ENCODE measurements at regions of chr15 and their contacts with region 1.

Region 1: DNA sequence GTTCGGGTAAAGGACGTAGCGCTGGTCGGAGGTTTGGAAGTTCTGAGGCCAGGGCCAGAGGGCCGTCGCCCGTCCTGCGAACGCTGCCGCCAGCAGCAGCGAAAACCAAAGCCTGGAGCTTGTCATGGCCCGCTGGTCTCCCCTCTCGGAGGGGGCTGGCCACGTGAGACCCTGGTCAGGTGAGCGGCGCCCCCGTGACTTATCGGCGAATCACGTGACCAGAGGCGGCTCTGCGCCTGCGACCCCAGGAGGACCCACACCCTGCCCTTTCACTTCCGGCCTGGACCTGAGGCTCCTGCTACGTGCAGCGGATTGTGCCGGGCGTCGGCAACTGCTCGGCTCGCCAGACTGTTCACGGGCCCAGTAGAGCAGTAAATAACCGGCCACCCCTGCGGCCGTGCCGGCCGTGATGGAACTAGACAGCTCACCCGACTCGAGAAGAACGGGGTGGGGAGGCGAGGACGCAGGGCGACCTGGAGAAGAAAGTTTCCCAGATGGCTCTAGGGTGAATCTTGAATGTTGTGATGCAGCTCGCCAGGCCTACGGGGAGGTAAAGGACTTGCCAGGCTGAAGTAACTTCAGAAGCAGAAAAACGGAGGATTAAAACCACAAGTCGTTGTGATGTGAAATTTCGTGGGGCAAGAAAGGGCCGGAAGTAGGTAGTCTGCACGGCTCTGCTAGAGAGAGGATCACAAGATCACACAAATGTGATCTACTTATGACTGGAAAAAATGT is at the start of gene HEXA:
- DNase-seq: peak; percentile 94 to 99
- ATAC-seq: peak; percentile 92 to 96
- H3K4me3 ChIP-seq: peak within 1 kb of the TSS; percentile 77
- H3K27ac ChIP-seq: peak within 1 kb of the TSS; percentile 86 to 91
- H3K4me1 ChIP-seq: peaks cover 18% of the 10 kb centered on the region
- CTCF ChIP-seq: no peak
- EP300 ChIP-seq: peak in 1 of 2 experiments; percentile 32; a peak in 1 of 5 replicates
- POLR2A ChIP-seq: peak; percentile 94
- RAD21 ChIP-seq: peak; percentile 12 to 29; a peak in 2 of 5 replicates
- polyA plus RNA-seq, gene HEXA: 148 and 180 TPM in 2 replicates

Region 2: DNA sequence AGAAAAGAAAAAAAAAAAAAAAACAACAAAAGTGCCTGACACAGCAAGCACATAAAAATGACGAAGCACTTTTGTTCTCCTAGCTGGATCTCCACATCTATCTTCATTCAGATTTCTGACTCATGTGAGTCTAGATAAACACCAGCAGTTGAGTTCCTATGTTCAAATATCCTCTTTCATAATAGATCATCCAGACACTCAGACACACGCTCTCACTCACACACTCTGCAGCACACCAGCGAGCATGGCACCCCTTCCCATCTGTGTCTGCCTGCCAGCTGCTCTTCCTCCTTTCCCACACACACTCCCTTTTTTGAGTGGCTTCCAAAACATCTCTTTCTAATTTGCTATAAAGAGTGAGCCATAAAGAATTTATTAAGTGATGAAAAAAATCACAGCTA is 36.2 kb before region 1 on chr15:
- CTCF ChIA-PET with region 1: no interaction called
- POLR2A ChIA-PET with region 1: interaction called, 16 read pairs
- DNase-seq: peak; percentile 72 to 89
- ATAC-seq: peak; percentile 91 to 95
- H3K4me3 ChIP-seq: no peak overlapping the region
- H3K27ac ChIP-seq: peak overlapping the region; percentile 83 to 84
- H3K4me1 ChIP-seq: peaks cover 34% of the 10 kb centered on the region
- CTCF ChIP-seq: no peak
- EP300 ChIP-seq: peak in 1 of 2 experiments; percentile 41; a peak in 1 of 5 replicates
- POLR2A ChIP-seq: no peak
- RAD21 ChIP-seq: 0 out of 5 replicates have a peak, but pooled peaks of 1 of the 2 experiments have one; percentile 18

Region 3: DNA sequence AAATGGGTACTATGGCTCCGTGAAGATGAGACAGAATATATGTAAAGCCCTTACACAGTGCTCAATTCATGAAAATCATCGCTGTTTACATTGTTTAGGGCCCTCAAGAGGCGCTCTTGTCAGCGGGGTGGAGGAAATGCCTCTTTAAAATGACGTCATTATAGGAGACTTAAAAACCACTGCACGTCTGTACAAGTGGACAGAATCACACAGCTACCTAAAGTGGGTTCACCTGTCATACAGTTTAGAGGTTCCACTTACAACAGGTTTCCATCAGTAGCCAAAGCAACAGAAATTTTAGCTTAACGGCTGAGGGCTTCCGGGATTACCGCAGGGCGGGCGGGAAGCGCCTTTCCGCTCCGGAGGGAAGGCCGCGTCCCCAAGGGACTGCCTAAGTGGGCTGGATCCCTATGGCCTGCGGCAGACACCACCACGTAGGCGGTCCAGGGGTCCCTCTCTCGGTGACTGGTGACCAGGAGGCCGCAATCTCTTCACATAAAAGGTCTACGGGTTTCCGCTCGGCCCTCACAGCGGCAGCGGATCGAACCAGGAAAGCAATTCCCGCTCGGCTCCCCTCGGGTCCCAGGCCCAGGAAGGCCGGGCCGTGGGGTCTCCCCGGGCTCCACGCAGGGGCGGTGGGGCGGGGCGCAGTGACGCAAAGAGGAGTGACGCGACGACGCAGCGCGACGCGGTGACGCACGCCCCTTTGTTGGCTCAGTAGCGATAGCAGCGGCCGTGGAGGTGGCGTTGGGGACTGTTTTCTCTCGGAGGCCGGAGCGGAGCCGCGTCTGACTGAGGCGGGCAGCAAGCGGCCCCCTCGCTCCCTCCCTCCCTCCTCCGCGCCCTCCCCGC is 97.8 kb after region 1 on chr15 and contains the start of gene ARIH1:
- CTCF ChIA-PET with region 1: interaction called, 5 read pairs
- POLR2A ChIA-PET with region 1: interaction called, 12 read pairs
- DNase-seq: peak; percentile 81 to 99
- ATAC-seq: peak; percentile 86 to 88
- H3K4me3 ChIP-seq: peak within 1 kb of the TSS; percentile 81
- H3K27ac ChIP-seq: peak within 1 kb of the TSS; percentile 90 to 93
- H3K4me1 ChIP-seq: peaks cover 21% of the 10 kb centered on the region
- CTCF ChIP-seq: peak; percentile 53
- EP300 ChIP-seq: no peak
- POLR2A ChIP-seq: peak; percentile 95
- RAD21 ChIP-seq: peak in 1 of 2 experiments; percentile 39; a peak in 3 of 5 replicates
- polyA plus RNA-seq, gene ARIH1: 127 and 138 TPM in 2 replicates

Region 4: DNA sequence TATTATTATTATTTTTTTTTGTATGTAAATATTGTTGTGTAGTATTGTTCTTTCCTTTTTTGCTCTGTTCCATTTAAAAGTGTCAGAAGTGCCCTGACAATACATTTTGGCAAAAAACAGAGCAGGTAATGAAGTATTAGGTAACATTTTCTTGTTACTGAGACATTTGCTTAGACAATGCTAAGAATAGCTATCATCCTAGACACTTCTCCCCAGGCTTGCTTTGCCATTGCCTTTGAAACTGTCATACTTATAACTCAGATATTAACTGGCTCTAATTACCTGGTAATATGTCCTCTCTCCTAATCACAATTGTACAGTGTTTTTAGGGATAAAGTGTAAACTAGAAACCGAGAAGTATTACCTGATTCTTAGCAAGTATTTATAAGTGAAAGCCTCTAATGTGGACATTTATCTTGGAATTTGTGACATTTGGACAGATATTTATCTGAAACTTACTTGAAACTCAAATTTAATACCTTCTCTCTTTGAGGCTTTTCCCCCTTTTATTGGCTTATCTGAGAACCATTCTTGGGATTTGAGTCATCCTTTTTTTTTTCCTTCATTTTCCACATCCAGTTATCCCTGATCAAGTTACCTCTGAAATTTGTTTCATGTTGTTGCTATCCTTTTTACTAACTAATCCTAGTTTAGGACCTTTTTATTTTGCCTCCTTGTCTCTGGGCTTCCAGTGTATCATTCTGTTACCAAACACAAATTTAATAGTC is 111.2 kb after region 1 on chr15:
- CTCF ChIA-PET with region 1: no interaction called
- POLR2A ChIA-PET with region 1: no interaction called
- DNase-seq: no peak
- ATAC-seq: no peak
- H3K4me3 ChIP-seq: no peak overlapping the region
- H3K27ac ChIP-seq: no peak overlapping the region
- H3K4me1 ChIP-seq: peaks cover 49% of the 10 kb centered on the region
- CTCF ChIP-seq: no peak
- EP300 ChIP-seq: no peak
- POLR2A ChIP-seq: no peak
- RAD21 ChIP-seq: no peak

Measured in A549 (cell line).